ENCODE measurements at regions of chr17 and their contacts with region 1.

Region 1: GRCh38 chr17:45284176-45285140 is 22.6 kb upstream of the SPATA32 start:
- DNase-seq: peak in 1 of 2 experiments; percentile 38
- H3K4me3 ChIP-seq: no peak overlapping the region
- H3K4me1 ChIP-seq: no peaks in the 10 kb centered on the region
- H3K27me3 ChIP-seq: no peaks in the 10 kb centered on the region

Region 2: GRCh38 chr17:44981221-44981968 is 303.1 kb before region 1 on chr17:
- in situ Hi-C with region 1: no loop called
- DNase-seq: no peak
- H3K4me3 ChIP-seq: no peak overlapping the region
- H3K4me1 ChIP-seq: no peaks in the 10 kb centered on the region
- H3K27me3 ChIP-seq: peaks cover 11% of the 10 kb centered on the region

Region 3: GRCh38 chr17:45338023-45338781 is 53.7 kb after region 1 on chr17:
- in situ Hi-C with region 1: loop called (anchors 5 kb)
- DNase-seq: no peak
- H3K4me3 ChIP-seq: no peak overlapping the region
- H3K4me1 ChIP-seq: no peaks in the 10 kb centered on the region
- H3K27me3 ChIP-seq: peaks cover 30% of the 10 kb centered on the region

Region 4: GRCh38 chr17:45376171-45377005 is 91.9 kb after region 1 on chr17:
- in situ Hi-C with region 1: loop called (anchors 5 kb)
- DNase-seq: no peak
- H3K4me3 ChIP-seq: no peak overlapping the region
- H3K4me1 ChIP-seq: peaks cover 6% of the 10 kb centered on the region
- H3K27me3 ChIP-seq: peaks cover 7% of the 10 kb centered on the region; the same call in 1 of the 2 replicates